ENCODE measurements at regions of chr17 and their contacts with region 1.

Region 1: GRCh38 chr17:35227546-35227945 is 15.3 kb upstream of the SLFN5 start:
- DNase-seq: no peak
- H3K4me3 Mint-ChIP-seq: no peak overlapping the region
- H3K27ac Mint-ChIP-seq: no peak overlapping the region
- H3K4me1 Mint-ChIP-seq: peaks cover 31% of the 10 kb centered on the region
- H3K27me3 Mint-ChIP-seq: no peaks in the 10 kb centered on the region

Region 2: DNA sequence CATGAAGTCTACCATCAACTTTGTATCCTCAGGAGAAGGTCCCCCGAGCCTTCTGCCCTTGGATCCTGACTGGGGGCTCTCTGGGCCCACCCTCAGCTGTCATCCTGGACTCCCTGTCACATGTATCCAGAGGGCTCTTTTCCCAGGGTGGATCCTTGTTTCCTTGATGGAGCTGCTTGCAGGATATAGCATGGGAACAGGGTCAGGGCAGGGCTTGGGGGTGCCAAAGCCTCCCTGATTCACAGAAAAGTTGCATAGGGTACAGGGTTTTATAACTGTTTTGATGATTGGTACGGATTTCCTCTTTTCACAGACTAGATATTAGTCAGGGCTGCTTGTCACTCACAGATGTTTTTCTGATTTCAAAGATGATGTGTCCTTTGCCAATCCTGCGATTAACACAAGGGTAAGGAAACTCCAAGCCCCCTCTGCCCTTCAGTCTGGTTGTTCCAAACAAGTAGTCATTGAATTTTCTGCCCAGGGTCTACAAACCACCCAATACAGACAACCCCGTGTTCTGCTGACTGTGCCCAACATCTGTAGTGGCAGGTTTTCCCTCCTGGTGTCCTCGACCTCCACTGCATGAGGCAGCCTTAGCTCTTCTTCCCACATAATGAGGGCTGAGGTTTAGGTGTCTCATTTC is 12.8 kb before region 1 on chr17:
- CTCF ChIA-PET with region 1: interaction called, 15 read pairs
- POLR2A ChIA-PET with region 1: interaction called, 3 read pairs
- DNase-seq: peak; percentile 38
- H3K4me3 Mint-ChIP-seq: peak overlapping the region; percentile 69
- H3K27ac Mint-ChIP-seq: peak overlapping the region; percentile 98
- H3K4me1 Mint-ChIP-seq: peaks cover 90% of the 10 kb centered on the region
- H3K27me3 Mint-ChIP-seq: no peaks in the 10 kb centered on the region

Region 3: DNA sequence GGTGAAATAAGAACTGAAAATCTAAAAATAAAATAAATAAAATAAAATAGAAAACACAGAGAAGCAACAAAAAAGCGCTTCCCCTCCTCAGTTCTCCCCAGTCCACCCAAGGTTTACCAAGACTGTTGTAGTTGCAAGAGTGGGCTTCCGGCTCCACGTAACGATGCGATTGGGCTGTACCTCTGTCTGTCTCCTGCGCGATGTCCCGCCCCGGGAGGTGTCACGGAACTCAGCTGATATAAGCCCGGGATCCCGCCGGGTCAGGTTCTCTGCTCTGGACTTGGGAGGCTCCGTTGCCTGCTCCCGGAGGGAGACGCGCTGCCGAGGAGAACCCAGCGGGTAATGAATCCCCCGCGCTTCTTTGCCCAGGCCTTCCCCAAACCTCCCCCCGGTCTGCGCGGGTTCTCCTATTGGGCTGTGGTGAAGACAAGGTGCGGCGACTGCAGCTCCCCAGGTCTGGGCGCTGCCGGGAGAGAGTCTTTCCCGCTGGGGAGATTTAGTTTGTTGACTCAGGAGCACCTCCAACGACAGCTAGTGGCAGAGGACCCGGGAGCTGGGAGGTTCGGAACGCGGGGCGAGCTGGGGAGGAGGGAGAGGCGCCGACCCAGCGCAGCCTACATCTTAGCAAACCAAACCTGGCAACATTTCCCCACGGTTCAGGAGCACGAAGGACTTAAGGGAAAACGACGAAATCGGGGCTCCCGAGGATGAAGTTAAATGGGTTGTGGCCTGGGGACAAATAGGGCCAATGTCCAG is 15.4 kb after region 1 on chr17 and contains the start of gene SLFN5:
- CTCF ChIA-PET with region 1: interaction called, 13 read pairs
- POLR2A ChIA-PET with region 1: no interaction called
- DNase-seq: peak; percentile 96
- H3K4me3 Mint-ChIP-seq: peak within 1 kb of the TSS; percentile 94
- H3K27ac Mint-ChIP-seq: peak within 1 kb of the TSS; percentile 97
- H3K4me1 Mint-ChIP-seq: peaks cover 53% of the 10 kb centered on the region
- H3K27me3 Mint-ChIP-seq: no peaks in the 10 kb centered on the region
- total RNA-seq, gene SLFN5: 199 to 212 TPM

Region 4: DNA sequence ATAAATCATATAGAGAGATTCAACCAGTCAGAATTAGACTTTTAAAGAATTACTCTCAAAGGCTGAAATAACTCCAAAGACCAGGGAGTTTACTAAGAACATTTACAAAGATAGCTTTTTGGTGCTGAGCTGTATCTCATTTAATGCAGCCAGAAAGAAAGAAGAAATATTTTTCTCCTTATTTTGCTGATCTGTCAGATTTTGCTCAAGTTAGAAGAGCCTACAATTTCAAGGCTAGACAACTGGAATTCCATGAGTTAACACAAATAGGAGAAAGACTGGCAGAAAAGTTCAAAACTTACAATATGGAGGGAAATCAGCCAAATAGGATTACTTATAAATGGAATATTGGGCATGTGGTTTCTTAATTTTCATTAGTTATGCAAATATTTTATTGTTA is 210.9 kb after region 1 on chr17:
- CTCF ChIA-PET with region 1: no interaction called
- POLR2A ChIA-PET with region 1: no interaction called
- DNase-seq: no peak
- H3K4me3 Mint-ChIP-seq: no peak overlapping the region
- H3K27ac Mint-ChIP-seq: no peak overlapping the region
- H3K4me1 Mint-ChIP-seq: peaks cover 10% of the 10 kb centered on the region
- H3K27me3 Mint-ChIP-seq: no peaks in the 10 kb centered on the region